ENCODE measurements at regions of chr11 and their contacts with region 1.

Region 1: GRCh38 chr11:61129639-61130523 is 27.6 kb downstream of the CD5 start:
- DNase-seq: no peak
- H3K4me3 ChIP-seq: peak overlapping the region in 3 of 4 donors; percentile 19 to 52 (median 32)
- H3K27ac ChIP-seq: peak overlapping the region; percentile 64 to 78 (median 68)
- H3K4me1 ChIP-seq: peaks cover 6 to 16% (median 10%) of the 10 kb centered on the region in 3 donors
- H3K27me3 ChIP-seq: no peaks in the 10 kb centered on the region
- CTCF ChIP-seq: peak; percentile 99 to 100 (median 100)
- POLR2A ChIP-seq: no peak

Region 2: DNA sequence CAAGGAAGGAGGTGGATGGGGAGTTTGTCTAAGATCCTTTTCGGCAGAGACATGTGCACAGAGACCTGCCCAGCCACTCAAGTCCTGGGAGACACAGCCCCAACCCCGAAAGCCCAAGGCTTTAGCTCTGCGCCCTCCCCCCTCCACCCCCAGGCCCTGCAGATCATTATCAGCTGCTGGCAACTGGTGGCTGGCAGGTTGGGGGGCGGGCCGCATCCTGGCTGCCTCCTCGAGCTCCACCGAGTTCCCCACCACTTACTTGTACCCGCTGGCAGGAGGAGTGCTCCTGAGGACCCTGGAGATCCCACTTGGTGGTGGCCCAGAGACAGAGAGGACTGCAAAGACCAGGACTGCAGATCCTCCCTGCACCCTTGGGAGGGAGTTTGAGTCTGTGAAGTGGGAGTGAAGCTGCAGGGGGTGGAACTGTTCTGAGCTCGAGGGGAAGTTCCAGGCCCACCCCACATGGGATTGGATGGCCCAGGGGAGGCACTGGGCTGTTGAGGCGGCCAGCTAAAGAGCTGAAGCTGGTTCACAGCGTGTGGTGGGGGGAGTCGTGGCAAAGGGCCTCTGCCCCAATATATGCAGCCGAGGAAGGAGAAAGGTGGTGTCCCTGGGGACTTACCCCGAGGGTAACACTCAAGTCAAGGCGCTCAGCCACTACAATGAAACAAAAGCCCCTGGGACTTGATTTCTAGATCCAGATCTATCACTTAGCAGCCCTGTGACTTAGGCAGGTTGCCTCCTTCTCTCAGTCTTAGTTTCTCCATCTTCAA is 307.9 kb before region 1 on chr11:
- intact Hi-C with region 1: loop called (anchors 10 kb)
- DNase-seq: no peak
- H3K4me3 ChIP-seq: no peak overlapping the region
- H3K27ac ChIP-seq: no peak overlapping the region
- H3K4me1 ChIP-seq: no peaks in the 10 kb centered on the region
- H3K27me3 ChIP-seq: no peaks in the 10 kb centered on the region
- CTCF ChIP-seq: no peak
- POLR2A ChIP-seq: no peak

Measured in esophagus squamous epithelium (tissue), 5 donors.